Spleen (tissue), 13 donors: ENCODE measurements at regions of chr16 and their contacts with region 1.

Region 1: DNA sequence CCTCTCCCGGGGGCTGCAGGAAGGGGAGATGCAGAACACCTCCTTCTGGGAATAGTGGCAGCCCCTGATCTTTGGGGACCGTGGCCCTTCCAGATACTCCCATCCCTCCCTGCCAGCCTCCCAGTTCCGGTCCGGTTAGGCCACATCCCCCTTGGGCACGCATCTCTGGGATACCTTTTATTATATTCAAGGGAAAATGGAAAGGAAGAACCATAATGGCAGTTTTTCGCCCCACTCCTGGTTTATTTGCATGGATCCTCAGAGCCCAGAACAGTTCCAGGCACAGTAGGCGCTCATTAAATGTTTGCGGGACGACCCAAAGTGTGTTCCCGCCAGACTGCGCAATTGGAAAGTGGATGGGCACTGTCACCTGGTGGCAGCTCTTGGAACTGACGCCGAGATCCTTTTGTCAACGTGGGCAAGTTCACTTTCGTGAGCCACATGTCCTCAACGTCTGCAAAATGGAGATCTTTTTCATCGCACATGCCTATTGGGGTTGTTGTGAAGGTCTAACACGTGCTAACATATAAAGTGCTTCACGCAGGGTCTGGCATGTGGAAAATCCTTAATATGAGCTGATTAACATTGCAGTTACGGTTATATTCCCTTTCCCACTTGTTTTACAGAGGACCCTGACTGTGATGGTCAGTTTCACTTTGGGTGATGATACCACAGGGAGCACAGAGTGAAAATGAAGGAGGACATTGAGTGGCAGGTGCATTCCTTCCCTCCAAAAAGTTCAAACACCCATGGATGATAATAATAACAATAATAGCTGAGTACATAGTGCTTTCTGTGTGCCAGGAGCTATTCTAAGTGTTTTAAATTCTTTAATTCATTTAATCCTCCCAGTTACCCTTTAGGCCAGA is 1.7 kb upstream of the GPRC5B start:
- DNase-seq: peak; percentile 88
- H3K4me3 ChIP-seq: peak overlapping the region in 6 of 8 donors; percentile 48 to 70 (median 53)
- H3K27ac ChIP-seq: no peak overlapping the region
- H3K4me1 ChIP-seq: peaks cover 19 to 38% (median 34%) of the 10 kb centered on the region in 6 donors
- H3K27me3 ChIP-seq: peaks cover 0 to 50% (median 31%) of the 10 kb centered on the region in 7 donors
- CTCF ChIP-seq: peak; percentile 88 to 98 (median 95)
- POLR2A ChIP-seq: no peak

Region 2: DNA sequence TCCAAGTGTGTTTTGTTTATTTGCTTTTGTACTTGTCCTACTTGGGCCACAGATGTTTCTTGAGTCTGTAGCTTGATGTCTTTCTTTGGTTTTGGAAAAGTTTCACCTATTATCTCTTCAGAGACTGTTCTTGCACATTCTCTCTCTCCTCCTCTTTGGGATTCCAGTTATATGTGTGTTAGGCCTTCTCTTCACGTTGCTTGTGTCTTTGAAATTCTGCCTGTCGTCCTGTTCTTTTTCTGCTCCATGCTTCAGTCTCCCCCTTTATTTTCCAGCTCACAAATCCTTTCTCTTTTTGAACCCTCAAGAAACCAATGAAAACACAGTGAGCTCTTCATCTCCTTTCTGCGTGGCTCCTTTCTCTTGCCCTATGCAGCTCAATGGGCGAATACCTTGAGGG is 322.9 kb before region 1 on chr16:
- intact Hi-C with region 1: loop called (anchors 5 kb)
- DNase-seq: no peak
- H3K4me3 ChIP-seq: no peak overlapping the region
- H3K27ac ChIP-seq: no peak overlapping the region
- H3K4me1 ChIP-seq: peaks cover 0 to 8% (median 1%) of the 10 kb centered on the region in 6 donors
- H3K27me3 ChIP-seq: no peaks in the 10 kb centered on the region
- CTCF ChIP-seq: no peak
- POLR2A ChIP-seq: no peak

Region 3: GRCh38 chr16:19583665-19584300 is 302.5 kb before region 1 on chr16:
- intact Hi-C with region 1: loop called (anchors 5 kb)
- DNase-seq: no peak
- H3K4me3 ChIP-seq: no peak overlapping the region
- H3K27ac ChIP-seq: no peak overlapping the region
- H3K4me1 ChIP-seq: no peaks in the 10 kb centered on the region
- H3K27me3 ChIP-seq: no peaks in the 10 kb centered on the region
- CTCF ChIP-seq: peak in 10 of 11 experiments; percentile 23 to 79 (median 68)
- POLR2A ChIP-seq: no peak

Region 4: GRCh38 chr16:19601083-19601976 is 285.0 kb before region 1 on chr16:
- intact Hi-C with region 1: loop called (anchors 5 kb)
- DNase-seq: no peak
- H3K4me3 ChIP-seq: no peak overlapping the region
- H3K27ac ChIP-seq: no peak overlapping the region
- H3K4me1 ChIP-seq: no peaks in the 10 kb centered on the region
- H3K27me3 ChIP-seq: no peaks in the 10 kb centered on the region
- CTCF ChIP-seq: peak in 7 of 11 experiments; percentile 18 to 50 (median 39)
- POLR2A ChIP-seq: no peak